ENCODE measurements at regions of chr5 and their contacts with region 1.

Region 1: GRCh38 chr5:159156426-159157238 is 52.7 kb downstream of the RNF145 start:
- DNase-seq: peak; percentile 58
- H3K4me3 Mint-ChIP-seq: no peak overlapping the region
- H3K27ac Mint-ChIP-seq: no peak overlapping the region
- H3K4me1 Mint-ChIP-seq: peaks cover 8% of the 10 kb centered on the region
- H3K27me3 Mint-ChIP-seq: no peaks in the 10 kb centered on the region
- CTCF ChIP-seq: peak; percentile 78

Region 2: DNA sequence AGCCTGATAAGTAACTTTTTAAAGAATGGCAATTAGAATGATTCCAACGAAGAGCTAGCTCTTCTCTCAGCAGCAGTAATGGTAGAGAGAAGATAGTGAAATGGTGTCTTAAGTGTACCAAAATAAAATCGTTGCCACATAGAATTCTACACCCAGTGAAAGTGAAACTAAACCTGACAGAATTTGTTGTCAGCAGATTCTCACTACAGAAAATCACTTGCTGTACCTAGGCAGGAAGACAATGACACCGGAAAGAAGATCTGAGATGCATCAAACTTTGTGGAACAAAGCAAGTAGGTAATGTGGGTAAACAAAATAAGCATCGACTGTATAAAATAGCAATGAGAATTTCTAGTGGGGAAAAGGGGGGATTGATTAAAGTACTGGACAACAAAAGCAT is 36.2 kb before region 1 on chr5:
- CTCF ChIA-PET with region 1: no interaction called
- intact Hi-C with region 1: no loop called
- DNase-seq: no peak
- H3K4me3 Mint-ChIP-seq: peak overlapping the region; percentile 11
- H3K27ac Mint-ChIP-seq: no peak overlapping the region
- H3K4me1 Mint-ChIP-seq: peaks cover 13% of the 10 kb centered on the region
- H3K27me3 Mint-ChIP-seq: peaks cover 17% of the 10 kb centered on the region
- CTCF ChIP-seq: no peak

Region 3: GRCh38 chr5:159209438-159210305 is 53.0 kb after region 1 on chr5 and contains the start of gene RNF145:
- CTCF ChIA-PET with region 1: interaction called, 9 read pairs
- intact Hi-C with region 1: loop called (anchors 2 kb)
- DNase-seq: peak; percentile 85
- H3K4me3 Mint-ChIP-seq: peak within 1 kb of the TSS; percentile 95
- H3K27ac Mint-ChIP-seq: peak within 1 kb of the TSS; percentile 96
- H3K4me1 Mint-ChIP-seq: peaks cover 65% of the 10 kb centered on the region
- H3K27me3 Mint-ChIP-seq: no peaks in the 10 kb centered on the region
- CTCF ChIP-seq: no peak
- total RNA-seq, gene RNF145: 169 and 193 TPM in 2 replicates

Region 4: DNA sequence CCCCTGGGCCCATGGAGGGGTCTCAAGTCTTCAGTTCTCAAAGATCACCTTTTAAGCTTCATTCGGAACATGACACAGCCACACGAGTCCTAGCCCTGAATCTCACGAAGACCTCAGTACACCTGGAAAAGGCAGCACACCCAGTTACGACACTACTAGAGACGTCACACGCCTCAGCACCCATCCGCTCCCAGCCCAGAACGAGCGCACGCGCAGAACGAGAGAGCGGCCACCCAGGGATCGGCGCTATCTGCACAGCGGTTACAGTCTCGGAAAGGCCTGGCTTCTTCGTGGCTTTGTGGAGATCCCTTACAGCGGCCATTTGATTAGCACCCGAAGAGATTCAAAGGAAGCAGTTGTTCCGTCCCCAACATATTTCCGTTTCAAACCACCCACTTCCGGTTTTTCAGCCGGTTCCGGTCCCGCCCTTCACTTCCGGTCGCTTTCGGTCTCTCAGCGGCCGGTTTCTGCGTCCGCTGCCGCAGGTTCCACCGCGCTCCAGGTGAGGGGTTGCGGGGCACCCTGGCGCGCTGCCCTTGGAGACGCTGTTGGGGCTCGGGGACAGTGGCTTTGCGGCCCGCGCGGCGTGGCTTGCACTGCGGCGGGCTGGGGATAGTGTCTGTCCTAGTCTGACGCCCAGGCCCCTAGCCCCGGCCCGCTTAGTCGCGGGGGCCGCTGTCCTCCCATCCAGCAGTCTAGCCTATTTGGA is 106.4 kb after region 1 on chr5 and contains the start of gene UBLCP1:
- CTCF ChIA-PET with region 1: interaction called, 5 read pairs
- intact Hi-C with region 1: loop called (anchors 2 kb)
- DNase-seq: peak; percentile 84
- H3K4me3 Mint-ChIP-seq: peak within 1 kb of the TSS; percentile 84
- H3K27ac Mint-ChIP-seq: peak within 1 kb of the TSS; percentile 92
- H3K4me1 Mint-ChIP-seq: peaks cover 9% of the 10 kb centered on the region
- H3K27me3 Mint-ChIP-seq: no peaks in the 10 kb centered on the region
- CTCF ChIP-seq: no peak
- total RNA-seq, gene UBLCP1: 35.8 and 39.5 TPM in 2 replicates

Region 5: DNA sequence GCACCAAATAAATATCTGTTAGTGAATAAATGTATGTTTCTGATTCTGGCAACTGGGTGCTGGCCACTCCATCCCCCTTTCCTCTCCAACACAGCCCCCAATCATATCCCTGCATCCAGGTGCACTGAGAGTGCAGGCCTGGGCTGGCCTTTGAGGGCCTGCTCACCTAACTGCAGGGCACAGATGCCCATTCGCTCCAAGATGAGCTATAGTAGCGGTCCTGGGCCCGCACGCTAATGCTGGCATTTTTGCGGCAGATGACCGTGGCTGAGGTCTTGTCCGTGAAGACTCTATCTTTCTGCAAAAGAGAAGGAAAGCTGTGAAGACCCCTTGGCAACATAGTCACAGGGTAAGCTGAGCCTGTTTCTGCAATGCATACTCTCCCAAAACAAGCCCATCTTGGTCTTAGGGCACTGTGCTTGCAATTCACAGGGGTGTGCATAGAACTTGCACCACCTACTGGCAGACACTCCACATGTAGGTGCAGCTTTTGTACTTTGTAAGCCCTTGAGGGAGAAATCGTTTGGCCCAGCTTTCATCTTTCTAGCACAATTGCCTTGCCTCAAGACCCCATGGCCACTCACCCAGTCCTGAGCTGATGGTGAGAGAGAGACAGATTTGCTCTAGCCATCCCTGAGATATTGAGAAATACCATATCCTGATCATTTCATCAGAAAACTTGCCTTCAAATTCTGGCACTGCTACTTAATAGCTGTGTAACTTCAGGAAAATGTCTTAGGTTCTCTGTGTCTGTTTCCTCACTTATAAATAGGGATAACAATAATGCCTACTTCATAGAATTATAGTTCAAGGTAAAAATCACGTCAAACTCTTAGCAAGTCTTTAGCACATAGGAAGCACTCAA is 160.1 kb after region 1 on chr5:
- CTCF ChIA-PET with region 1: interaction called, 42 read pairs
- intact Hi-C with region 1: loop called (anchors 1 kb)
- DNase-seq: peak; percentile 57
- H3K4me3 Mint-ChIP-seq: no peak overlapping the region
- H3K27ac Mint-ChIP-seq: no peak overlapping the region
- H3K4me1 Mint-ChIP-seq: no peaks in the 10 kb centered on the region
- H3K27me3 Mint-ChIP-seq: peaks cover 53% of the 10 kb centered on the region
- CTCF ChIP-seq: peak; percentile 74

Region 6: DNA sequence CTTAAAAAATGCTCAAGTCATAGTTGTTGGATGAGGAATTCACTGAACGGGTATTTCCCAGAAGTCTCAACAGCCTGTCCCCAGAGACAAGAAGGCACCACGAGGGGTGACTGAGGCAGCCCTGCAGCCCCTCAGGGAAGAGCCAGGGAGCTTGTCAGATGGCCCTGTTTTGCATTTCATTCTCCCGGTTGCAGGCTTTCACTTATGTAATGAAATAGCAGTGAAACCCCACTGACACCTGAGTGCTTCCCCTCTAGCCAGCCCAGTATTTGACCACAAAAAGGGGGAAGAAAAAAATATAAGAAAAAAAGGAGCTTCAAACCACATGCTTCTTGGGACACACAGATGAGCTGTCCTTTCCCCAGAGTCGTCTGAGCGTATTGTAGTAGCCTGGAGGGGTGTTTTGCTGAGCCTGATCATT is 249.0 kb after region 1 on chr5:
- CTCF ChIA-PET with region 1: no interaction called
- intact Hi-C with region 1: loop called (anchors 5 kb)
- DNase-seq: no peak
- H3K4me3 Mint-ChIP-seq: no peak overlapping the region
- H3K27ac Mint-ChIP-seq: no peak overlapping the region
- H3K4me1 Mint-ChIP-seq: peaks cover 9% of the 10 kb centered on the region
- H3K27me3 Mint-ChIP-seq: peaks cover 85% of the 10 kb centered on the region
- CTCF ChIP-seq: no peak

Region 7: DNA sequence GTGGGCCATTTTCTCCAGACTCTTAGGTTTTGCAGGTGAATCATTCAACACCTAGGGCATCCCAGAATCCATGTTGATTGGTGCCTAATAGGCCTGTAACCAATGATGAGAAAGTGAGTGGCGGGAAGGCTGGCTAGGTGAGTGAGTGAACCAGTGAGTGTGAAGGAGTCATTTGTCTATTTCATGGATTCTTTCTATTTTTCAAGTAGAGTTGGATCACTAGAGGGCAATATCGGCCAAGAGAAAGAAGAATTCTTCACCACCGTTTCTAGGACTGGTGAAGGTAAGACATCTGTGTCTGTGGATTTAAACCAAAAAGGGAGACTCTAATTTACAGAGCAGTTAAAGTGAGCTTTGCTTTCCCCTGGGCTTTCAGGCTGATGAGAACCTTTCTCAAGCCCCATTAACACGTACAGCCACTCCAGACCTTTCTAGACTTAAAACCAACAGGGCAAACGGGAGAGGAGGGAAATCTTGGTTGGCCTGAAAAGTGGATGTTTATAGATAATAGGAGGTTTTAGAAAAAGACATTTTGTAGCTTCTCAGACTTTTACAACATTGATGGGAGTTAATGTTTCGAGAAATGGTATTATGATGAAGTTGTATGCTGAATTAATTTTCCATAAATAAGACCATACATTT is 287.9 kb after region 1 on chr5:
- CTCF ChIA-PET with region 1: no interaction called
- intact Hi-C with region 1: loop called (anchors 1 kb)
- DNase-seq: peak; percentile 24
- H3K4me3 Mint-ChIP-seq: no peak overlapping the region
- H3K27ac Mint-ChIP-seq: no peak overlapping the region
- H3K4me1 Mint-ChIP-seq: peaks cover 21% of the 10 kb centered on the region
- H3K27me3 Mint-ChIP-seq: peaks cover 1% of the 10 kb centered on the region
- CTCF ChIP-seq: no peak

Region 8: DNA sequence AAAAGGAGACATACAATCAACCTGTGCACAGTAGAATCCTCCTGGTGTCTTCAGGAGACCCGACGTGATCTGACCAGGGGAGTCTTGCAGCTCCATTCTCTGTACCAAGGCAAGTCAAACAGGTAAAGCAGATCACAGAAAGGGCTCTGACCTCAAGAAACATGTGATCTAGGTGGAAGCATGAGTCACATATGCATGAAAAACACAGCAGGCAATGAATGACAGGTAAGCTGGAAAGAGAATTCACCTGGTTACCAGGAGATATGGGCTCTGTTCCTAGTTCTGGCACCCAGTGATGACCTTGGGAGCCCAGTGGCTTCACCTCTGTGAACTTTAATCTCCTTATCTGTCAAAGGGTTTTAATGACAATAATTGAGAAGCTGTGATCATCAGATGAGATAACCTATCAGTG is 1053.3 kb after region 1 on chr5:
- CTCF ChIA-PET with region 1: no interaction called
- intact Hi-C with region 1: loop called (anchors 5 kb)
- DNase-seq: peak; percentile 56
- H3K4me3 Mint-ChIP-seq: no peak overlapping the region
- H3K27ac Mint-ChIP-seq: peak overlapping the region; percentile 82
- H3K4me1 Mint-ChIP-seq: peaks cover 26% of the 10 kb centered on the region
- H3K27me3 Mint-ChIP-seq: no peaks in the 10 kb centered on the region
- CTCF ChIP-seq: no peak